MCF 10A (cell line): ENCODE measurements at regions of chr13 and their contacts with region 1.

Region 1: DNA sequence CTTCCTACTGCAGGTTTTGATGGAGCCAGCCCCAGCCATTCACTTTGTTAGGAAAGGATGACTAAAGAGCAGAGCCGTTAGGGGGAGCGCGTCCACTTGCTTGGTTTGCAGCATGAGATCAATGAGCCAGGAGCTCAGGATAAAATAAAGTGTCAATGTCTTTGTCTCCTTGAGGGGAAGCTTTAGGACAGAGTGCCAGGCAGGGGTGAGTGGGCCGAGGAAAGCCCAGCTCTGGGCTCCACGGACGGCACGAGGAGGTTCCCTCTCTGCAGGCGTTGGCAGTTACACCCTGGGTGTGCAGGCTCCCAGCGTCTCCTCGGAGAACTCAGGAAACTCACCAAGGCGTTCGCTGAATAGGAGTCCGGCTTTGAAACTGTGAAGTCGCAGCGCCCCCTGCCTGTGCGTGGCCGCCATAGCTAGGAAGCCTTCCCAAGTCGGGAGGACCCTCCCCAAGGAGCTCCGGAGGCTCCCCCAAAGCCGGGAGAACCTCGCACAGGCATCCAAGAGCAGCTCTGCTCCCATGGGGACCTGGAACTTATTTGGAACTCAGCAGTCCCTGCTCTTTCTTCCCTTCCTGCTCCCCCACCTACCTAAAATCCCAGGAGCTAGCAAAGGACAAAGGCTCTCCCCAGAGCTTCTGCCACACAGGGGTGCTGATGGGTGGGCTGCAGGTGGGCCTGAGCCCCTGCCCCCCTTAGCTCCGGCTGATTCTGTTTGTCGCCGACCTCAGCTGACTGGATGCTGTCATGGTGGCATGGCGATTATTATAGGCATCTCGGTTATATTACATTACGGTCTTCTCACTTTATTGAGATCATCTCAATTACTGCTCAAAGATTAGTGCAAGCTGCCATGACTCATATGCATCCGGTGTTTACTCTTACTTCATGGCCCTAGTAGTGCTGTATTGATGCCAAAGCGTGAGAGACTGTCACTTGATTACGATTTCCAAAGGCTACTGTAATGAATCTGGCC is 34.4 kb downstream of the GSX1 start:
- DNase-seq: peak; percentile 87
- H3K4me3 Mint-ChIP-seq: peak overlapping the region; percentile 66
- H3K27ac Mint-ChIP-seq: peak overlapping the region; percentile 66
- H3K4me1 Mint-ChIP-seq: peaks cover 21% of the 10 kb centered on the region
- H3K27me3 Mint-ChIP-seq: peaks cover 29% of the 10 kb centered on the region
- CTCF ChIP-seq: peak; percentile 95

Region 2: GRCh38 chr13:27388241-27388640 is 438.4 kb before region 1 on chr13:
- CTCF ChIA-PET with region 1: interaction called, 15 read pairs
- POLR2A ChIA-PET with region 1: no interaction called
- intact Hi-C with region 1: no loop called
- DNase-seq: no peak
- H3K4me3 Mint-ChIP-seq: no peak overlapping the region
- H3K27ac Mint-ChIP-seq: no peak overlapping the region
- H3K4me1 Mint-ChIP-seq: no peaks in the 10 kb centered on the region
- H3K27me3 Mint-ChIP-seq: no peaks in the 10 kb centered on the region
- CTCF ChIP-seq: no peak

Region 3: DNA sequence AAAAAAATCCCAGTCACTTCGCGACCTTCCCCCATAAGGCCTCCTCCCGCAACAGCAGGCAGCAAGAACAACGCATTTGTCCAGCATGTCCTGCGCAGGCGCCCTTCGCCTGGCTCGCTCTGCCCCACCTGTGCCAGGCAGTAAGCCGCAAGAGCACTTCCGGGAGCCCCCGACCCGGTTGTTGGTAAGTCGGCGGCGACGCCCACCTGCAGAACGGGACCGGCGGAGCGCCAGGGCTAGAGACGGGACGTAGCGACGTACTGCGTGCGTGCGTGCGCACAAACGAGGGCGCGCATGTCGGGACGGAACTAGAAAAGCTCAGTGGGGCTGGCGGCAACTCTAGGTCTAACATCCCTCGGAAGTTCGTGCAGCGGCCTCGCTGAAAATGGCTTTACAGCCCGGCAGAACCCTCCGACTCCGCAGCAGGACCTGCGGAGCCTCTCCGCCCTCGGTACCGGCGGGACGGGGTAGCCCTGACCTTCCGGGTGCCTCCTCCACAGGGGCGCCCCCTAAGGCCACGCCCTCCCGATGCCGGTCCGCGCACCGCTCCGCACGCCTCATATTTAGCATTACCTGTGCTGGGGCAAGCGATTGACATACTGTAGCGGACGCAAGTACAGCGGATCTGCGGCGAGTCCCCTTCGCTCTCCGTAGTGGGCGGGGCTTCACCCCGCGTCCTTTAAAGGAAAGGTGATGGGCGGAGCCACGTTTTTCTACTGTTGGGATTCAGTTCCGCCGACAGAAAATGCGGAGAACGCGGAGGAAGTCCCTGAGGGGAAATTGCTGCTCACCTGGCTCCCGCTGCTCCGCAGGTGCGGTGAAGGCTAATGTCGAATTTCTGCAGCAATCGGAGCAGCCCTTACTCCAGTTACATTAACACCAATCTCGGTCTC is 376.5 kb before region 1 on chr13 and contains the start of gene MTIF3:
- CTCF ChIA-PET with region 1: interaction called, 4 read pairs
- POLR2A ChIA-PET with region 1: interaction called, 10 read pairs
- intact Hi-C with region 1: no loop called
- DNase-seq: peak; percentile 95
- H3K4me3 Mint-ChIP-seq: peak within 1 kb of the TSS; percentile 84
- H3K27ac Mint-ChIP-seq: peak within 1 kb of the TSS; percentile 97
- H3K4me1 Mint-ChIP-seq: peaks cover 16% of the 10 kb centered on the region
- H3K27me3 Mint-ChIP-seq: no peaks in the 10 kb centered on the region
- CTCF ChIP-seq: no peak
- total RNA-seq, gene MTIF3: 35.6 and 40.9 TPM in 2 replicates

Region 4: GRCh38 chr13:27620377-27621115 is 206.1 kb before region 1 on chr13 and contains the start of gene LNX2:
- CTCF ChIA-PET with region 1: interaction called, 12 read pairs
- POLR2A ChIA-PET with region 1: interaction called, 29 read pairs
- intact Hi-C with region 1: loop called (anchors 2 kb)
- DNase-seq: peak; percentile 97
- H3K4me3 Mint-ChIP-seq: peak within 1 kb of the TSS; percentile 93
- H3K27ac Mint-ChIP-seq: peak within 1 kb of the TSS; percentile 74
- H3K4me1 Mint-ChIP-seq: peaks cover 45% of the 10 kb centered on the region
- H3K27me3 Mint-ChIP-seq: no peaks in the 10 kb centered on the region
- CTCF ChIP-seq: no peak
- total RNA-seq, gene LNX2: 12.3 and 15.6 TPM in 2 replicates

Region 5: GRCh38 chr13:27808851-27809550 is 17.7 kb before region 1 on chr13:
- CTCF ChIA-PET with region 1: interaction called, 16 read pairs
- POLR2A ChIA-PET with region 1: interaction called, 3 read pairs
- intact Hi-C with region 1: no loop called
- DNase-seq: peak; percentile 30
- H3K4me3 Mint-ChIP-seq: no peak overlapping the region
- H3K27ac Mint-ChIP-seq: no peak overlapping the region
- H3K4me1 Mint-ChIP-seq: peaks cover 11% of the 10 kb centered on the region
- H3K27me3 Mint-ChIP-seq: no peaks in the 10 kb centered on the region
- CTCF ChIP-seq: no peak

Region 6: GRCh38 chr13:27960362-27961226 is 133.9 kb after region 1 on chr13:
- CTCF ChIA-PET with region 1: interaction called, 85 read pairs
- POLR2A ChIA-PET with region 1: no interaction called
- intact Hi-C with region 1: no loop called
- DNase-seq: peak; percentile 62
- H3K4me3 Mint-ChIP-seq: peak overlapping the region; percentile 61
- H3K27ac Mint-ChIP-seq: no peak overlapping the region
- H3K4me1 Mint-ChIP-seq: no peaks in the 10 kb centered on the region
- H3K27me3 Mint-ChIP-seq: no peaks in the 10 kb centered on the region
- CTCF ChIP-seq: peak; percentile 52

Region 7: DNA sequence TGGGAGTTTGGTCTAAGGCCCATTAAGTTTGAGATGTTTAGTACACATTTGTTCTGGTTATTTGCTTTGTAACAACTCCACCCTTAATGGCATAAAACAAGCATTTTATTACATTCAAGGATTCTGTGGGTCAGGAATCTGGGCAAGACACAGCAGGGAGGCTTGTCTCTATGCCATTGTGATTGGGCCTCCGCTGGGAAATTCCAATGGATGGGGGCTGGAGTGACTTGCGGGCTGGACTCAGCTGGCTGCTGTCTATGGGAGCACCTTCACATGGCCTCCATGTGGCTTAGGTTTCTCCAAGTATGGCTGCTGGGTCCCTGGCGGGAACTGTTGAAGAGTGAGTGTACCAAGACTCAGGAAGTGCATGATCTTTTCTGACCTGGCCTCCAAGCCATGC is 470.7 kb after region 1 on chr13:
- CTCF ChIA-PET with region 1: no interaction called
- POLR2A ChIA-PET with region 1: no interaction called
- intact Hi-C with region 1: no loop called
- DNase-seq: no peak
- H3K4me3 Mint-ChIP-seq: no peak overlapping the region
- H3K27ac Mint-ChIP-seq: no peak overlapping the region
- H3K4me1 Mint-ChIP-seq: no peaks in the 10 kb centered on the region
- H3K27me3 Mint-ChIP-seq: no peaks in the 10 kb centered on the region
- CTCF ChIP-seq: no peak